K562 (cell line): ENCODE measurements at regions of chr10 and their contacts with region 1.

Region 1: GRCh38 chr10:104406715-104407650 is 53.4 kb downstream of the CFAP58 start:
- DNase-seq: peak in 1 of 4 experiments; percentile 25
- ATAC-seq: peak; percentile 60; the same call in 2 of the 3 replicates
- H3K4me3 ChIP-seq: no peak overlapping the region
- H3K27ac ChIP-seq: no peak overlapping the region
- H3K4me1 ChIP-seq: no peaks in the 10 kb centered on the region
- H3K27me3 ChIP-seq: no peaks in the 10 kb centered on the region
- CTCF ChIP-seq: peak; percentile 26 to 52 (median 48); a peak in 4 of 6 replicates
- EP300 ChIP-seq: no peak
- POLR2A ChIP-seq: no peak
- RAD21 ChIP-seq: peak; percentile 46 to 62

Region 2: DNA sequence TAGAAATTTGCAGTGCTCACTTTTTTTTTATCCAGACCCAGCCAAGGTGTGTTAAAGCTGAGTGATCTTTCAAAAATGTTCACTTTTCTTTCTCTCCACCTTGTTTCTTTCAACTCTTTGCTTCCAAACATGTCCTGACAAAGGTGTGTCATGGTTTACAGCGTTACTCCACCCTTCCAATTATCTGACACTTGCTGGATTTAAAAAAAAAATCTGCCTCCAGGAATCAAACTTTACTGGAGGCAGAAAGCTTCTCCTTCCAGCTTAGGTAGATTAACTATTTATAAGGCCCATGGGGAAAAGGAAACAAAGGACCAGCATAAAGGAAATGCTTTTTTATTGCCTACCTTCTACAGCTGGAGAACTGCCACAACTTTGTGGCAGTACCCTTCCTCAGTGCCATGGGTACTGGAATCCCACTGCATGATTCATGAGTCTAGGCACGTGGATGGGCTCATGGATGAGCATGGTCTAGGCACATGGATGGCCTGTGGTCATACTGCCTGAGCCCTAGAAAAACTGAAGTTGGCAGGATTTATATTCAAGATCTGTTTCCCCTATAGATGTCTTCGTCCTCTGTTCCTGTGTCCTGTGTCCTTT is 321.1 kb before region 1 on chr10 and contains the start of gene COL17A1:
- CTCF ChIA-PET with region 1: no interaction called
- POLR2A ChIA-PET with region 1: no interaction called
- in situ Hi-C with region 1: no loop called
- intact Hi-C with region 1: no loop called
- DNase-seq: no peak
- ATAC-seq: no peak
- H3K4me3 ChIP-seq: no peak within 1 kb of the TSS
- H3K27ac ChIP-seq: no peak within 1 kb of the TSS
- H3K4me1 ChIP-seq: no peaks in the 10 kb centered on the region
- H3K27me3 ChIP-seq: peaks cover 3 to 7% of the 10 kb centered on the region in 2 experiments; a peak in 4 of 5 replicates
- CTCF ChIP-seq: no peak
- EP300 ChIP-seq: no peak
- POLR2A ChIP-seq: no peak
- RAD21 ChIP-seq: no peak
- polyA plus RNA-seq, gene COL17A1: not detected

Region 3: DNA sequence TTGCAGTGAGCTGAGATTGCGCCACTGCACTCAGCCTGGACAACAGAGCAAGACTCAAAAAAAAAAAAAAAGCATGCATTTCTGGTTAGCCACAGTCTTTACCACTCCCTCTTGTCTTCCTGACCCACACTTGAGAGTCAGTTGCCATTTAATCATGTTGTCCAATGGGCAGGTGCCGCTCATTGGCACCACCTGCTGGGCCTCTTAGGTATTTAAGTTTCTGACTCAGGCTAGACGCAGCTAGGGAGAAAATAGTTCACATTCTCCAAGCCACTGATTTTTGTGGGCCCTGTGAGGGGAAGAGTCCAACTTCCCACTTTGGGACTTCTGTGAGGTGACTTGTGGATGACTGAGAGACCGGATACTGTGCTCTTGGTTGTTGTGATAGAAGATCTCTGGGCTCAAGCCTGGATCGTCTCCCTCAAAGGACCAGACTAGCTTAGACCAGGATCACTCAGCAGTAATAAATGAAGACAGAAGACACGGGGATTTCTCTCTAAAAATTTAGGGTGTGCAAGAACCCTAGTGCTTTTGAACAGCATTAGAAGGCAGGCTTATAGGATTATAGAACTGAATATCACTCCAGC is 207.4 kb after region 1 on chr10:
- CTCF ChIA-PET with region 1: no interaction called
- POLR2A ChIA-PET with region 1: no interaction called
- in situ Hi-C with region 1: no loop called
- intact Hi-C with region 1: loop called (anchors 1 kb)
- DNase-seq: peak; percentile 47 to 60 (median 52)
- ATAC-seq: peak; percentile 88
- H3K4me3 ChIP-seq: no peak overlapping the region
- H3K27ac ChIP-seq: no peak overlapping the region
- H3K4me1 ChIP-seq: no peaks in the 10 kb centered on the region
- H3K27me3 ChIP-seq: no peaks in the 10 kb centered on the region
- CTCF ChIP-seq: peak; percentile 57 to 64 (median 59)
- EP300 ChIP-seq: no peak
- POLR2A ChIP-seq: no peak
- RAD21 ChIP-seq: peak; percentile 24 to 52; a peak in 3 of 4 replicates